ENCODE measurements at regions of chr9 and their contacts with region 1.

Region 1: GRCh38 chr9:14314929-14315645 is 1.1 kb upstream of the NFIB start:
- DNase-seq: peak; percentile 91
- H3K4me3 ChIP-seq: peak overlapping the region; percentile 59 to 74 (median 68)
- H3K27ac ChIP-seq: peak overlapping the region; percentile 91 to 97 (median 96)
- H3K4me1 ChIP-seq: peaks cover 0 to 49% (median 15%) of the 10 kb centered on the region in 4 donors
- H3K27me3 ChIP-seq: peaks cover 10% of the 10 kb centered on the region
- CTCF ChIP-seq: no peak
- EP300 ChIP-seq: no peak
- POLR2A ChIP-seq: peak; percentile 39

Region 2: DNA sequence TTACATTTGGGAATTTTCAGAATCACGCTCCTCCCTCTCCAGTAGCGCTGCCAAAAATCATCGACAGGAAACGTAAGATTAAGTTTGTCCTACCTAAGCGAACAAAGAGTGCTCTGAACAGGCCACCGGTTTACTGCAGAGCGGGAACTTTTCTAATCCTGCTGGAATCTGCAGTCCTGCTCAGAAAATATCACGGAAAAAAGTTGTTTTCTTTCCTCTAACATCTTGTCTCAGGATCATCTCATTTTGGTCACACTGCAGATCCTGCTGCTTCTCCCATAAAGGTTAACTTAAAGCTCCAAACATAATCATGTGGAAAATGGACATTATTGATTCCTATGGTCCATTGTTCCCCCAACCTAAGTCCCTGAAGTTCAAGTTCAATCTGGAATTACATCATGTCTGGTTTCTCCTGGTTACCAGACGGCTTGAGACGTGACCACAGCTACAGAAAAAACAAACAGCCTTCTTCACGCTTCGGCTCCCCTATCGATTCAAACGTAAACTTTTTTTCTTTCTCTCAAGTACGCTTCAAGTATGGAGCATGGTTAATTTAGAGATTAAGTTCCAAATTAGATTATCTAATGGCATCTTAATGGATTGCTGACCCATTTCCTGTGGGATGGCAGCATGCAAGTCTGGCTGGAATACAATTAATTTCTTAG is 218.7 kb before region 1 on chr9:
- in situ Hi-C with region 1: no loop called
- intact Hi-C with region 1: loop called (anchors 10 kb)
- DNase-seq: no peak
- H3K4me3 ChIP-seq: no peak overlapping the region
- H3K27ac ChIP-seq: peak overlapping the region; percentile 51 to 64 (median 57)
- H3K4me1 ChIP-seq: peaks cover 0 to 26% (median 2%) of the 10 kb centered on the region in 4 donors
- H3K27me3 ChIP-seq: no peaks in the 10 kb centered on the region
- CTCF ChIP-seq: no peak
- EP300 ChIP-seq: no peak
- POLR2A ChIP-seq: no peak

Measured in transverse colon (tissue), 4 donors.